H1 (cell line): ENCODE measurements at regions of chr11 and their contacts with region 1.

Region 1: GRCh38 chr11:47186076-47186936 is at the start of gene PACSIN3:
- DNase-seq: peak in 1 of 2 experiments; percentile 81
- H3K4me3 ChIP-seq: peak within 1 kb of the TSS; percentile 62 to 92 (median 82)
- H3K27ac ChIP-seq: peak within 1 kb of the TSS; percentile 81
- H3K4me1 ChIP-seq: peaks cover 0 to 8% (median 6%) of the 10 kb centered on the region in 4 experiments; a peak in 5 of 7 replicates
- H3K27me3 ChIP-seq: peaks cover 0 to 6% (median 0%) of the 10 kb centered on the region in 4 experiments; a peak in 3 of 7 replicates
- CTCF ChIP-seq: no peak
- EP300 ChIP-seq: no peak
- POLR2A ChIP-seq: peak in 1 of 2 experiments; percentile 91; a peak in 2 of 3 replicates
- RAD21 ChIP-seq: no peak
- total RNA-seq, gene PACSIN3: 47.2 and 59.3 TPM in 2 replicates

Region 2: DNA sequence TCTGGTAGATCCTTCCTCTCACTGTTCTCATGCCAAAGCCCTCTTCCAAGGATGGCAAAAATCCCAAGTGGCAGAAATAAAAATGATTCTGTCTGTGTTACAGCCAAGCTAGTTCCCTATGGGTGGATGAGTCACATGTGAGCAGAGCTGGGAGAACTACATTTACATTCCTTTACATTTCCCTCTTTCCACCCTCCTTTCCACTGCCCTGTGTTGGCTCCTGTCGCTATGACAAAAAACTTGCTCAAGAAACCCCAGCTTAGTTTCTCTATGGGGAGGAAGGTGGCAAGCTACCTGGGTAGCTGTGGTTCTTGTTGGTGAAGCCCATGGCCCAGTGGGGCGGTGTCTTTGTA is 18.3 kb after region 1 on chr11:
- CTCF ChIA-PET with region 1: interaction called, 247 read pairs
- POLR2A ChIA-PET with region 1: interaction called, 23 read pairs
- DNase-seq: no peak
- H3K4me3 ChIP-seq: no peak overlapping the region
- H3K27ac ChIP-seq: 0 out of 2 replicates have a peak overlapping the region, but pooled peaks have one; percentile 42
- H3K4me1 ChIP-seq: peaks cover 2 to 7% (median 5%) of the 10 kb centered on the region in 4 experiments; a peak in 6 of 7 replicates
- H3K27me3 ChIP-seq: no peaks in the 10 kb centered on the region
- CTCF ChIP-seq: no peak
- EP300 ChIP-seq: no peak
- POLR2A ChIP-seq: no peak
- RAD21 ChIP-seq: no peak

Region 3: DNA sequence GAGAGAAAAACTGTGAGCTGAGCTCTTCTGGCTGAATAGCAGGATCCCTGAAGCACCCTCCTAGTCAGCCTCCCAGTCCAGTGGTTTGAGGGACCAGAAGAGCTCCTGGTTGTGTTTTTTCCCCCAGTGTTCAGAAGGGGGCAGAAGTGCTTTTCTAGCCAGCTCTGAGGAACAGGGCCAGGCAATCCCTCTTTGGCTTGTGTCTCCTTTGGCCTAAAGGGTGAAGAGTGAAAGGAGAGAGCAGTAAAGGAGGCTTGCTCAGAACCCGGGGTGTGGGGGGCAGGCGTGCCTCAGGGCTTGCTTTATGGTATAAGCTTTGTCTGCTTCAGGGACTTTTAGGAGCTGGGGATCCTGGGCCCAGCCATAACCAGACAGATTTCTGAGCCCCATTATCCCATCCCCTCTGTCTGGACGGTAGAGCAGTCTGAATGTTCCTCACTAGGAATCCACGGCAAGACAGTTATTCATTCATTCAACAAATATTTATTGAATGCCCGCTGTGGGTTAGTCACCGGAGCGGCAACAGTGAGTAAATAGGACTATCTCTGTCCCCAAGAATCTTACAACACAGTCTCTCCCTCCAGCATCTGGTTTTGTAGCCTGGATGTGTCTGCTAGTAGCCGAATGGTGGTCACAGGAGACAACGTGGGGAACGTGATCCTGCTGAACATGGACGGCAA is 47.8 kb after region 1 on chr11:
- CTCF ChIA-PET with region 1: interaction called, 88 read pairs
- POLR2A ChIA-PET with region 1: interaction called, 14 read pairs
- DNase-seq: no peak
- H3K4me3 ChIP-seq: no peak overlapping the region
- H3K27ac ChIP-seq: no peak overlapping the region
- H3K4me1 ChIP-seq: 0 out of 7 replicates have a peak, but pooled peaks cover 0 to 2% (median 0%) of the 10 kb centered on the region in 4 experiments
- H3K27me3 ChIP-seq: no peaks in the 10 kb centered on the region
- CTCF ChIP-seq: peak; percentile 21 to 53 (median 52)
- EP300 ChIP-seq: no peak
- POLR2A ChIP-seq: peak in 1 of 2 experiments; percentile 17; a peak in 1 of 3 replicates
- RAD21 ChIP-seq: peak; percentile 51 to 58; a peak in 3 of 4 replicates

Region 4: DNA sequence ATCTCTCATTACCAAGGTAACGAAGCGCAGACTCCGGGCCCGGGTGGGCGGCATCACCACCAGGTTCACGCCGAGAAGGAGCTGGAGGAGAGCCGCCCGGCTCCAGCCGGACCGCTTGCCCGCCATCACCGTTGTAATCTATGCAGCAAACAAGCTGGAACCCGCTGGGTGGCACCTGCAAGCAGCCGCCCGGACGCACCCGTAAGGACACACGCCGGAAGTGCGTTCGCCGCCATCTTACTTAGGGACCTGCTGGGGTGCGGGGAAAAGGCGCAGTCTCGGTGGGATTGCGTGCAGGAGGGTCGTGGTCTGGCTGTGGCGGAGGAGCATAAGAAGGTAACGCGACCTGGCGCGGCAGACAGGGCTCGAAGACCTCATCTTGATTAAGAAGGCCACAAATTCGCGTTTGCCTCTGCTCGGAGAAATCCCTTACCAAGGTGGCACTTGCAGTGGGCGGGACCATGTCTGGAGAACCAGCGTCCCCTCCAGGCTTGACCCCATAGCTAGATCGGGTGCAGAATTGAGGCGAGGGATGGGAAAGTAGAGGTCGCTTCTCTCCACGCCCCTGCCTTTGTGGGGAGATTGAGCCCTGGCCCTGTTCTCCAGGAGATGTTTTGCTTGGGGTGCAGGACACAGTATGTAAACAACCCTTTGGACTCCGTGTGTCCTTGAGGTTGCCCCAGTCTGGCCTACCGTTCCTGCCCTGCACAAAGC is 62.5 kb after region 1 on chr11 and contains the start of gene ACP2:
- CTCF ChIA-PET with region 1: interaction called, 7 read pairs
- POLR2A ChIA-PET with region 1: interaction called, 29 read pairs
- DNase-seq: peak in 1 of 2 experiments; percentile 93
- H3K4me3 ChIP-seq: peak within 1 kb of the TSS; percentile 42 to 97 (median 93)
- H3K27ac ChIP-seq: peak within 1 kb of the TSS; percentile 96
- H3K4me1 ChIP-seq: peaks cover 0 to 9% (median 0%) of the 10 kb centered on the region in 4 experiments; a peak in 4 of 7 replicates
- H3K27me3 ChIP-seq: no peaks in the 10 kb centered on the region
- CTCF ChIP-seq: peak; percentile 0 to 51 (median 42); a peak in 3 of 4 replicates
- EP300 ChIP-seq: peak in 1 of 2 experiments; percentile 76; a peak in 1 of 3 replicates
- POLR2A ChIP-seq: peak; percentile 61 to 96
- RAD21 ChIP-seq: peak; percentile 8 to 12; a peak in 2 of 4 replicates
- total RNA-seq, gene ACP2: 17.8 and 18.9 TPM in 2 replicates